Psoas muscle (tissue), 8 donors: ENCODE measurements at regions of chr12 and their contacts with region 1.

Region 1: DNA sequence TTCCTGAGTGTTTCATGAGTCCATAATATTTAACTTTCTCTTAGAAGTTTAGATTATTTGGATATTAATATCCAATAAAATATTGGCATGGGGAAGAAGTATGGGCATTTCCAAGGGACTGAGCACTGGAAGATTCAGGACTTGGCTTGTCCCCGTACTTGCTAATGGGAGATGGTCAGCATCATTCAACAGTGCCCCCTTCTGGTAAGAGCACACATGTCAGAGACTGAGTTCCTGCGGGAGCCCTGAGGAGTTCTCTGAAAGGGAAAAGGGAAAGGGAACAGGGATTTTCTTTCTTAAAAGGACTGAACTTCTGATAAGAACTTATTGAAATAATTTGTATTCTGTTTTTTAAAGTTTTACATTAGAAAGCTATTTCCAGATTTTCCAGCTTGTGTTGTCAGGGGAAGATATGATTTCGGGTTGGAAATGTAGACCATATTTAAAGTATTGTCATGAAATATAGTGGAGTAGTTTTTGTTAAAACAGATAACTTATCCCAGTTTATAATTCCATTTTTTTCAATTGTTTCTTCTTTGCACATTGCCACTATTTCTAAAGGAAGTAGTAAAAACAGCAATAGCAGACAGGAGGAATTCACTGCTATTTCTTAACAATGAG is 59.8 kb upstream of the C12orf71 start:
- DNase-seq: no peak
- ATAC-seq: peak; percentile 66 to 84 (median 78)
- H3K4me3 ChIP-seq: no peak overlapping the region
- H3K27ac ChIP-seq: no peak overlapping the region
- H3K4me1 ChIP-seq: no peaks in the 10 kb centered on the region
- H3K27me3 ChIP-seq: no peaks in the 10 kb centered on the region
- CTCF ChIP-seq: peak; percentile 74

Region 2: DNA sequence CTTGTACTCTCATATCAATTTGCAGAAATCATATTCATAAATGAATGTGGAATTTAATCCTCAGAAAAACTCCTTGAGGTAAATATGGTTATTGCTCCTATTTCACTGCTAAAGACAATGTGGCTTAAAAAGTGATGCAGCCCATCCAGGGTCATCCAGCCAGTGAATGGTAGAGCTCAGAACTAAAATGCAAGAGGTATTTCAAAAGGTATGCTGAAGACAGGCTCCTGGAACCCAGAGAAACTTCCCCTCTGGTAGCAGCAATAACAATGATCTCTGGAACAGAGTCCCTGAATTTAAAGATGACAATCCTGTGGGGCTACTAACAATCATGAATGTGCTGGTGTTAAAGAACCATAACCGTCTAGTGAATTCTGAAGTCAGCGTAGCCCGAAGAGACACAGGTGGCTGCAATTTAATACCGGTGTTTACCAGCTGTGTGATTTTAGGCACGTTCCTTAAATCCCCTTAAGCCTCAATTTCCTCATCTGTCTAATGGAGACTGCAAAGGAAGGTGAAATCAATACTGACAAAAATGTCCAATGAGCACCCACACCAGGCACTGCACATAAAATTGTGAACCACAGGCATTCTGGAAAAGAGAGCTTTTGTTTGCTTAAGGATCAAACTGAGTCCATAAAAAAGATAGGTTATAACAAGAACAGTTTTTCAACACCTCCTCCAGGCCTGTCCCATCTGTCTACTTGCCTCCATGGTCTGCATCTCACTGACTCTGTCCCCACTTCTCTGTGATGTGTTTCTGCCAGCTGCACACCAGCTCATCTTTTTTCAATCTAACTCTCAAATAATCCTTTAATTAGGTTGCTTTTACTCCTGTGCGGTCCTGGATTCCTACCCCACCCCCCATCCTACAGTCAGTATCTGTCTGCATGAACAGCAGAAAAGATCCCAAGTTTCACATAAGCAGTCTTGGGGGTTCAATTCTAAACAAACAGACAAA is 138.5 kb before region 1 on chr12:
- intact Hi-C with region 1: no loop called
- DNase-seq: no peak
- ATAC-seq: peak in 1 of 4 donors; percentile 28
- H3K4me3 ChIP-seq: no peak overlapping the region
- H3K27ac ChIP-seq: no peak overlapping the region
- H3K4me1 ChIP-seq: no peaks in the 10 kb centered on the region
- H3K27me3 ChIP-seq: no peaks in the 10 kb centered on the region
- CTCF ChIP-seq: no peak

Region 3: DNA sequence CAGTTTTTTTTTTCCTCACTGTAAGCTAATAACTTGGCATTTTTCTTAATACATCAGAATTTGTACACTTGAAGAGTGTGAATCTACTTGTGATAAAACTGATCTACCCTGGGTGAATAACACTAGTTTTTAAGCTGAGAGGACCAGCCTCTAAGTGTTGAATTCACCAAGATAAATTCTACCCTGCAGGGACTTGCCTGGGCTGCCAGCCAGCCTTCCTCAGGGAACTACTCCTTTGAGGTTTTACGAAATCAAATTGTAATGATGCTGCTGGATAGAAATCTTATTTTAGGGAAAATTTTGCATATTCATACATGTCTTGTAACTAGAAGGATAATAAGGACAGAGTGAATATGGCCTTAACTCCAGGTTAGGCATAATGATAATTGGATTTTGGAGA is 117.9 kb before region 1 on chr12:
- intact Hi-C with region 1: loop called in 1 of 2 experiments (anchors 5 kb)
- DNase-seq: no peak
- ATAC-seq: no peak
- H3K4me3 ChIP-seq: no peak overlapping the region
- H3K27ac ChIP-seq: no peak overlapping the region
- H3K4me1 ChIP-seq: peaks cover 20% of the 10 kb centered on the region
- H3K27me3 ChIP-seq: no peaks in the 10 kb centered on the region
- CTCF ChIP-seq: no peak

Region 4: DNA sequence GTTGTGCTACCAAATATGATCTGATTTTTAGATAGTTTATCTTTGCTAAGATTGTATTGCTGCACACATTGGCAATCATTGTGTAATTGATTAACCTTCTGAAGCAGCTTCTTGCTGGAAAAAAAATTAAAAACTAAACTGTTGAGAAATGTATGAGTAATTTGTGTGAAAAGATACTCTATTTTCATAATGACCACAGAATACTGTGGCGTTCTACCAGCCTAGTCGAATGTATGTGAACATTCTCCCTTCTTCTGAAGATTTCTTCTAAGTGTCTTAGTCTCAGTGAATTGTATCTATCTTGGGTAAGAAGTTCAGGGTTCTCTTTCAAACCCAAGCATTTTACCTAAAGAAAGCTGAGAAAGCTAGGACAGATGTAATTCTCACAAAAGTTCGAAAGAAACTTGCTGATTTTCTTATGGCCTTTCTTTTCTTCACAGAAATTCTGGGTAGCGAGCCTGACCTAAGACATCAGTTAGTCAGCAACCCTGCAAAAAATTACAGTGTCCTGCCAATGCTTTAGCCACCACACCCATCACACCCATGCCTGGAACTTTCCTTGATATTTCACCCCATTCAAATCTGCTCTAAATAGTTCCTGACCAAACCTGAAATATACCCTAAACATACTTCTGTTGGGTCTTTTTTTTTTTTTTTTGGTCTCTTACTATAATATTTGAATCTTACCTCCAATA is 32.7 kb before region 1 on chr12:
- intact Hi-C with region 1: no loop called
- DNase-seq: no peak
- ATAC-seq: no peak
- H3K4me3 ChIP-seq: no peak overlapping the region
- H3K27ac ChIP-seq: no peak overlapping the region
- H3K4me1 ChIP-seq: no peaks in the 10 kb centered on the region
- H3K27me3 ChIP-seq: no peaks in the 10 kb centered on the region
- CTCF ChIP-seq: no peak

Region 5: DNA sequence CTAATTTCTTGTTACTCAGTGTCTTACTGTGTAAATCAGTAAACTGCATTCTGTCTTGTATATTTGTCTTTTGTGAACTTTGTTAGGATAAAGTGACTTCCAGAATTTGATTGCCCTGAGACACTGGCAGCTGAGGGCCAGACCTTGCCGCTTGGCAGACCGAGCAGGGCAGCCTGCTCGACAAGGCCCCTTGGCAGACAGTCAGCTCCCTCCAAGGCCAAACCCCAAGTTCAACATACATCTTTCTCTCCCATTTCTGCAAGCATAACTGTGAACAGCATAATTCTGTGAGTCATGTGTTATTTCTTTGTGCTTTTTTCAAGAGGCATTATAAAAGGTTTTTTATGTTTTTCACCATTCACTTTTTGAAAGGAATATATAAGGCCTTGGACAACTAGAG is 151.3 kb after region 1 on chr12:
- intact Hi-C with region 1: loop called in 1 of 2 experiments (anchors 10 kb)
- DNase-seq: no peak
- ATAC-seq: no peak
- H3K4me3 ChIP-seq: no peak overlapping the region
- H3K27ac ChIP-seq: no peak overlapping the region
- H3K4me1 ChIP-seq: peaks cover 5% of the 10 kb centered on the region
- H3K27me3 ChIP-seq: no peaks in the 10 kb centered on the region
- CTCF ChIP-seq: no peak